CD4-positive, alpha-beta memory T cell (primary cell): ENCODE measurements at regions of chr17 and their contacts with region 1.

Region 1: GRCh38 chr17:35088881-35089585 is 25.5 kb upstream of the RFFL start:
- DNase-seq: peak; percentile 86 to 95 (median 88)
- H3K4me3 ChIP-seq: peak overlapping the region; percentile 76 to 96
- H3K4me3 Mint-ChIP-seq: peak overlapping the region; percentile 93 to 99 (median 96)
- H3K27ac ChIP-seq: peak overlapping the region; percentile 97
- H3K27ac Mint-ChIP-seq: peak overlapping the region; percentile 92 to 99 (median 97)
- H3K4me1 ChIP-seq: peaks cover 42% of the 10 kb centered on the region
- H3K4me1 Mint-ChIP-seq: peaks cover 28 to 55% (median 40%) of the 10 kb centered on the region in 4 donors
- H3K27me3 ChIP-seq: no peaks in the 10 kb centered on the region
- H3K27me3 Mint-ChIP-seq: no peaks in the 10 kb centered on the region

Region 2: DNA sequence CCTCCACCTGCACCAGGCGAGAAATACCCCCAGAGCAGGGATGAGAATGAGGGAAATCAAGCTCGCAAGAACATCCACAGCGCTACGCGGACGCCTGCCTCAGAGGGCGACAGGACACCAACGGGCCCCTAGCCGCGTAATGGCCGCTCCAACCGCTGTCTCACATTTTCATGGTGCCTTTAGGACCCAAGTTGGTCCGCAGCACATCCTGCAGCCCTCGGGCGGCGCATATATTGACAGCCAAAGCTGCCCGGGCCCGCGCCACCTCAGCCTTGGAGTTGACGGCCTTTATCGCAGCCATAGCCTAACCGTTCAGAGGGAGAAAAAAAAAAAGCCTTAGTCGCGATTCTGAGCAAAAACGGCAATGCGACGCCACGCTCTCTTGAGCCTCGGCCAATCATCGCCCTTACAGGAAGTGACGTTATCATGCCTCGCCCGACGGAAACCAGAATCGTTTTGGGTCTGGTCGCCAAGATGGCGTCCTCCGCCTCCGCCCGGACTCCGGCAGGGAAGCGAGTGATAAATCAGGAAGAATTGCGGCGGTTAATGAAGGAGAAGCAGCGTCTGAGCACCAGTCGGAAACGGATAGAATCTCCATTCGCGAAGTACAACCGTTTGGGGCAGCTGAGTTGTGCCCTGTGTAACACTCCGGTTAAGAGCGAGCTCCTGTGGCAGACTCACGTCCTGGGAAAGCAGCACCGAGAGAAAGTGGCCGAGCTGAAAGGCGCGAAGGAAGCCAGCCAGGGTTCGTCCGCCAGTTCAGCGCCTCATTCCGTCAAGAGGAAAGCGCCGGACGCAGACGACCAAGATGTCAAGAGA is 127.7 kb before region 1 on chr17 and contains the starts of genes CCT6B and ZNF830:
- CTCF ChIA-PET with region 1: interaction called, 6 read pairs
- POLR2A ChIA-PET with region 1: interaction called, 6 read pairs
- intact Hi-C with region 1: loop called (anchors 1 kb)
- DNase-seq: peak; percentile 90 to 95 (median 92)
- H3K4me3 ChIP-seq: peak within 1 kb of the TSS; percentile 82 to 84
- H3K4me3 Mint-ChIP-seq: peak within 1 kb of the TSS; percentile 100
- H3K27ac ChIP-seq: peak within 1 kb of the TSS; percentile 86
- H3K27ac Mint-ChIP-seq: peak within 1 kb of the TSS; percentile 97 to 100 (median 100)
- H3K4me1 ChIP-seq: peaks cover 20% of the 10 kb centered on the region
- H3K4me1 Mint-ChIP-seq: peaks cover 17 to 38% (median 27%) of the 10 kb centered on the region in 4 donors
- H3K27me3 ChIP-seq: no peaks in the 10 kb centered on the region
- H3K27me3 Mint-ChIP-seq: peaks cover 0 to 4% of the 10 kb centered on the region in 2 donors
- total RNA-seq, gene CCT6B: 2.0 to 2.1 TPM
- total RNA-seq, gene ZNF830: 41.0 to 44.0 TPM

Region 3: GRCh38 chr17:34998205-34998604 is 90.8 kb before region 1 on chr17:
- CTCF ChIA-PET with region 1: interaction called, 70 read pairs
- POLR2A ChIA-PET with region 1: interaction called, 18 read pairs
- intact Hi-C with region 1: loop called (anchors 1 kb)
- DNase-seq: peak; percentile 75 to 79 (median 77)
- H3K4me3 ChIP-seq: no peak overlapping the region
- H3K4me3 Mint-ChIP-seq: no peak overlapping the region
- H3K27ac ChIP-seq: no peak overlapping the region
- H3K27ac Mint-ChIP-seq: peak overlapping the region in 6 of 7 donors; percentile 20 to 88 (median 80)
- H3K4me1 ChIP-seq: peaks cover 7% of the 10 kb centered on the region
- H3K4me1 Mint-ChIP-seq: peaks cover 4 to 12% (median 5%) of the 10 kb centered on the region in 4 donors
- H3K27me3 ChIP-seq: no peaks in the 10 kb centered on the region
- H3K27me3 Mint-ChIP-seq: no peaks in the 10 kb centered on the region

Region 4: DNA sequence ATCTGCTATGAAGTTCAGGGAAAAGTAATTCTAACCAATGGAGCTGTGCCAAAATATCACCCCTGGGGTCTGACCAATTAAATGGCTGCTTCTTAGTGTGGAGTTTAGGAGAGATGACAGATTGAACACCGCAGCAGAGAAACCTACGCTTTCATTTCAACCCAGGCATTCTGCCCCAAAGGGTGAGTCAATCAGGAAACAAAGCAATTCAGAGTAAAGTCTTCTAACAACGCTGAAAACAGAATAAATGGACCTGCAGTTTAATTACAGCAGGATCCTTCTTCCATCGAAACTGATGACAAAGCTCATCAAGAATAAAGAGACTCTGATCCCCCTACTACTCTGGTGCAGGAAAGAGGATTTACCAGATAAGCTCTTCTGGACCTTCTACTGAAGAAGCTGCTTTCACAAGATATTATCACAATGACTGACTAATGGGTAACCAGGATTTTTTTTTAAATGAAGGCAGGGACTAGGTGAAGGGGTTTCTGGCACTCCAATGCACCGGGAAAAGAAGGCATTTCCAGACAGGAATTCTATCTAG is 42.2 kb before region 1 on chr17:
- CTCF ChIA-PET with region 1: interaction called, 7 read pairs
- POLR2A ChIA-PET with region 1: interaction called, 27 read pairs
- intact Hi-C with region 1: loop called (anchors 1 kb)
- DNase-seq: peak; percentile 71 to 89 (median 73)
- H3K4me3 ChIP-seq: peak overlapping the region; percentile 26 to 35
- H3K4me3 Mint-ChIP-seq: peak overlapping the region; percentile 74 to 87 (median 86)
- H3K27ac ChIP-seq: peak overlapping the region; percentile 68
- H3K27ac Mint-ChIP-seq: peak overlapping the region; percentile 83 to 96 (median 92)
- H3K4me1 ChIP-seq: peaks cover 94% of the 10 kb centered on the region
- H3K4me1 Mint-ChIP-seq: peaks cover 55 to 82% (median 68%) of the 10 kb centered on the region in 4 donors
- H3K27me3 ChIP-seq: no peaks in the 10 kb centered on the region
- H3K27me3 Mint-ChIP-seq: no peaks in the 10 kb centered on the region

Region 5: DNA sequence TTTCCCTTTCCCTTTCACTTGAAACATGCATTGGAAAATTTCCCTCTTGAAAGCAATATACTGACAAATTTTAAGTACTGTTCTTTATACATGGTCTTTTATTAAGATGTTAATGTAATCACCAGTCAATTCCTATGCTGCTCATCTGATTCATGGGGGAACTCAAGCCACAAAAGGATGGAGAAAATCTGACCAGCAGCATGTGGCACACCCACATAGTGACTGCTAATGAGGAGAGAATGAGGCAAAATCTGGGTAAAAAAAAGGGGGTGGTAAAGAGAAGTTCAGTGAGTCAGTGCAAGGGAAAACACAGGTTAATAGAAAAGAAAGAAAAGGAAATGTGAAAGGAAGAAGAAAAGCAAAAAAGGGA is 36.8 kb before region 1 on chr17:
- CTCF ChIA-PET with region 1: interaction called, 11 read pairs
- POLR2A ChIA-PET with region 1: interaction called, 27 read pairs
- intact Hi-C with region 1: loop called (anchors 1 kb)
- DNase-seq: no peak
- H3K4me3 ChIP-seq: peak overlapping the region in 1 of 2 donors; percentile 25
- H3K4me3 Mint-ChIP-seq: peak overlapping the region; percentile 4 to 86 (median 79)
- H3K27ac ChIP-seq: peak overlapping the region; percentile 60
- H3K27ac Mint-ChIP-seq: peak overlapping the region; percentile 80 to 99 (median 95)
- H3K4me1 ChIP-seq: peaks cover 94% of the 10 kb centered on the region
- H3K4me1 Mint-ChIP-seq: peaks cover 62 to 83% (median 67%) of the 10 kb centered on the region in 4 donors
- H3K27me3 ChIP-seq: no peaks in the 10 kb centered on the region
- H3K27me3 Mint-ChIP-seq: no peaks in the 10 kb centered on the region

Region 6: GRCh38 chr17:35069311-35069710 is 19.7 kb before region 1 on chr17:
- CTCF ChIA-PET with region 1: interaction called, 49 read pairs
- POLR2A ChIA-PET with region 1: interaction called, 29 read pairs
- intact Hi-C with region 1: loop called (anchors 1 kb)
- DNase-seq: no peak
- H3K4me3 ChIP-seq: no peak overlapping the region
- H3K4me3 Mint-ChIP-seq: no peak overlapping the region
- H3K27ac ChIP-seq: no peak overlapping the region
- H3K27ac Mint-ChIP-seq: peak overlapping the region in 4 of 7 donors; percentile 1 to 61 (median 9)
- H3K4me1 ChIP-seq: peaks cover 57% of the 10 kb centered on the region
- H3K4me1 Mint-ChIP-seq: peaks cover 38 to 78% (median 60%) of the 10 kb centered on the region in 4 donors
- H3K27me3 ChIP-seq: no peaks in the 10 kb centered on the region
- H3K27me3 Mint-ChIP-seq: no peaks in the 10 kb centered on the region

Region 7: DNA sequence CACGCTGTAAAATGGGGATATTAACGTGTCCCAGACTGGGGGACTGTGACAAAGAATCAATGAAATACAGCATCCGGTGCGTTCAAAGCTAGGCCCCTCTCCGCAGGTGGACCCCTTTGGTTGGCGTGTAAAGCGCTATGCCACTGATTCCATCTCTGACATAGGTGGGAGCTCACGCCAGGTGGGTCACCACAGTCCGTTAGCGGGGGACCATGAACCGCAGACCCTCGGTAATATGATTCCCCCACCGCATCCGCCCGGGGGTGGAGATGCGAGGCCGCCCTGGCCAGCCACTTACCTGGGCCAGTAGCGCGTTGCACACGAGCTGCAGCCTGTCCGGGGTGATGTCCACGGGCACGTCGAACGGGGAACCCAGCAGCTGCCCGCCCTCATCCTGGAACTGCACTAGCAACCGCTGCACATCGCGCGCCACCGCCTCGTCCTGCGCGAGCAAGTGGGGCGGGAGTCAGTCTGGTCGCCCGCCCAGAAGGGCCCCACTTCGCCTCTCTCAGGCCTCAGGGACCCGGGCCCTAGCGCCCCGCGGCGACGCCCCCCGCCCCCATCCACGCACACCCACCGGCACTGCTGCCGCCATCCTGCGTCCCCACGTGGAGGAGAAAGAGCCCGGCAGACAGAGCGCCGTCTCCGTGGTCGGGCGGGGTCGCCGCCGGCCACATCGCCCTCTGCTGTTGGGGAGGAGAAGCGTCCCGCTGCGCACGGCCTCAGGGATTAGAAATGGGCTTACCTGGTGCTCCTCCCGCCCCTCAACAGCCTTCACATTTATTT is 52.8 kb after region 1 on chr17 and contains the start of gene NLE1:
- CTCF ChIA-PET with region 1: interaction called, 4 read pairs
- POLR2A ChIA-PET with region 1: interaction called, 8 read pairs
- intact Hi-C with region 1: loop called (anchors 1 kb)
- DNase-seq: peak; percentile 85 to 89 (median 87)
- H3K4me3 ChIP-seq: peak within 1 kb of the TSS; percentile 80 to 99
- H3K4me3 Mint-ChIP-seq: peak within 1 kb of the TSS; percentile 82 to 91 (median 88)
- H3K27ac ChIP-seq: peak within 1 kb of the TSS; percentile 77
- H3K27ac Mint-ChIP-seq: peak within 1 kb of the TSS; percentile 72 to 91 (median 78)
- H3K4me1 ChIP-seq: peaks cover 14% of the 10 kb centered on the region
- H3K4me1 Mint-ChIP-seq: peaks cover 8 to 32% (median 20%) of the 10 kb centered on the region in 4 donors
- H3K27me3 ChIP-seq: no peaks in the 10 kb centered on the region
- H3K27me3 Mint-ChIP-seq: no peaks in the 10 kb centered on the region
- total RNA-seq, gene NLE1: 20.1 to 20.5 TPM